ENCODE measurements at regions of chr19 and their contacts with region 1.

Region 1: DNA sequence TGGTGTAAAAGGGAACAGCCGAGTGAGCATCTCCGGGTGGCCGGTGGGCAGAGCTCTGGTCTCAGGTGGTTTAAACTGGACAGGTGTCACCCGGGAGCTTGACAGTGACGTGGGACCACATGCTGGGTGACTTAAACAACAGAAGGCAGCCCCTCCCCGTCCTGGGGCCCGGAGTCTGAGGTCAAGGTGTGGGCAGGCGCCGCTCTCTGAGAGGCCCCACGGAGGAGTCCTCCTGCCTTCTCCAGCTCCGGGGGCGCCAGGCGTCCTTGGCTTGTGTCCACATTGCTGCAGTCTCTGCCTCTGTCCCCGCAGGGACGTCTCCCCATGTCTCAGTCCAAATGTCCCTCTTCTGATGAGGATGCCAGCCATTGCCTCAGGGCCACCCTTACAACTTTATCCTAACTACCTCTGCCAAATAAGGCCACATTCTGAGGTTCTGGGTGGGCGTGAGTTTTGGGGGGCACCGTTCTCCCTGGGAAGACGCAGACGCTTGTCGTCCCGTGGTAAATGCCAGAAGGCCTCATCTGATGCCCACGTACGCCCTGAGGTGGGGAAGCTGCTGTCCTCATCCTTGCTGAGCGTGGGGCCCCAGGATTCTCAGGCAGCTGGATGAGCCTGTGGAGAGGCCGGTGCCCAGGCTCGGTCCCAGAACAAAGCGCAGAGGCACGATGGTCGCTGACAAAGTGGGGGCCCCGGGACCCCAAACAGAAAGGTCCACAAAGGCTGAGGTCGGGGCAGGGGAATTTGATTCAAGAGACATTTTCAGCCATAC is 12.9 kb downstream of the GZMM start:
- DNase-seq: peak; percentile 27
- ATAC-seq: peak; percentile 33
- H3K4me3 ChIP-seq: peak overlapping the region; percentile 36 to 73 (median 43)
- H3K27ac ChIP-seq: peak overlapping the region; percentile 81
- H3K4me1 ChIP-seq: peaks cover 55% of the 10 kb centered on the region
- H3K27me3 ChIP-seq: no peaks in the 10 kb centered on the region; a peak in 1 of 5 replicates
- CTCF ChIP-seq: no peak
- EP300 ChIP-seq: no peak
- POLR2A ChIP-seq: peak in 1 of 2 experiments; percentile 46; a peak in 1 of 4 replicates
- RAD21 ChIP-seq: no peak

Region 2: DNA sequence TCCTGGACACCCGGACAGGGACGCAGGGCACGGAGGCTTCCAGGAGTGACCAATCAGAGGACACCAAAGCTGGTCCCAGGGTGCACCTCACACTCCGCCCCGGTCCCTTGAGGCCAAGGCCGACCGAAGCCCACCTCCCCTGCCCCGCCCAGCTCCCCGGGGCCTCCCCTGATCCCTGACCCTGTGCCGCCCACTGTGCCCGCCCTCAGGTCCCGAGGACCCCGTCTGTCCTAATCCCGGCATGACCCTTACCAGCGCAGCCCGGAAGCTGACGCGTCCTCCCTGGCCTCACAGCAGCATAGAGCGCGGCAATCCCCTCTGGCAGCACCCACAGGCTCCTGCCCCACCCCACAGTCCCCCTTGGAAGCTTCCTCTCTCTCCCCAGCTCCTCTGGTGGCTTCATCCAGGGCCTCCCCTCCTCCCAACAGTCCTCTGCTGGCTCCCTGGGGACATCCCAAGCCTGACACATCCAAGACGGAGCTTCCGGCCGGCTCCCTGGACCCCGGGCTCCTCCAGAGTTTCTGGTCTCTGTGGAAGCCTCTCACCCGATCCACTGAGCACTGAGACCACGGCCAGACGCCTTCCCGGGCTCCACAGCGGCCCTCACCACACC is 32.6 kb before region 1 on chr19:
- CTCF ChIA-PET with region 1: no interaction called
- POLR2A ChIA-PET with region 1: interaction called, 15 read pairs
- in situ Hi-C with region 1: no loop called
- intact Hi-C with region 1: no loop called
- DNase-seq: peak; percentile 80
- ATAC-seq: peak; percentile 90
- H3K4me3 ChIP-seq: peak overlapping the region; percentile 30 to 63 (median 42); a peak in 5 of 6 replicates
- H3K27ac ChIP-seq: peak overlapping the region; percentile 95
- H3K4me1 ChIP-seq: peaks cover 58% of the 10 kb centered on the region
- H3K27me3 ChIP-seq: no peaks in the 10 kb centered on the region
- CTCF ChIP-seq: peak; percentile 35
- EP300 ChIP-seq: peak; percentile 84 to 91; a peak in 3 of 4 replicates
- POLR2A ChIP-seq: peak; percentile 59 to 79; a peak in 3 of 4 replicates
- RAD21 ChIP-seq: no peak

Region 3: DNA sequence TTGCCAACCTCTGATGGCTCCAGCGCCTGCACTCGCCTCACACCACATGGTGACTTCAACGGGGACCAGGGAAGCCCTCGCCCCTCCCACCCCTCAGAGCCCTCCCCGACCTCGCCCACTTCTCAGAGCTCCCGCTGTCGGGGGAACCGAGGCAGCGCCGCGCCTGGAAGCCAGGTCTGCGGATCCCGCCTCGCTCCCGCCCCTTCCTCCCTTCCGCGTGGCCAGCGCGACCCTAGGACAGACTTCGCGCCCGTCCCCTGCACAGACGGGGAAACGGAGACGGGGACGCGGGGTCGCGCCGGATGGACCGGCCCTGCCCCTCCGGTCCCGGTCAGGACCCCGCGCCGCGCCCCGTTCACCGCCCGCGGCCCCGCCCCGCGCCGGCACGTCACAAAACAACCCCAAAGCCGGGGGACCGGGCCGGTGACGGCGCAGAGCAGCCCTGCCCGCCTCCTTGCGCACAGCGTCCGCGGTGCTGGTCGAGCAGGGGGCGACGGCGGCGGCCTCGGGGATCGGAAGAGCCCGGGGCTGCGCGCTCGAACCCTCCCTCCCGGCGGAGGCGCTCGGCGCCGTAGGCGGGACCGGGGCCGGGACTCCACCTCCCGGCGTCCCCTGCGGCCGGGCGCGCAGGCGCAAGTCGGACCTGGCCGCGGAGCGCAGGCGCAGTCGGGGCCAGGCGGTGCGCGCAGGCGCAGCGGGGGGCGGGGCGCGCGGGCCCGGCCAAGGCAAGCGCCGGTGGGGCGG is 25.6 kb before region 1 on chr19:
- CTCF ChIA-PET with region 1: no interaction called
- POLR2A ChIA-PET with region 1: interaction called, 10 read pairs
- in situ Hi-C with region 1: no loop called
- intact Hi-C with region 1: no loop called
- DNase-seq: peak; percentile 80
- ATAC-seq: peak; percentile 68
- H3K4me3 ChIP-seq: peak overlapping the region; percentile 63 to 98 (median 97)
- H3K27ac ChIP-seq: peak overlapping the region; percentile 94
- H3K4me1 ChIP-seq: peaks cover 56% of the 10 kb centered on the region
- H3K27me3 ChIP-seq: no peaks in the 10 kb centered on the region
- CTCF ChIP-seq: peak; percentile 34
- EP300 ChIP-seq: no peak
- POLR2A ChIP-seq: peak; percentile 39 to 78
- RAD21 ChIP-seq: no peak; the same call in none of the 2 replicates

Region 4: GRCh38 chr19:572140-572742 is 15.4 kb after region 1 on chr19 and contains the start of gene BSG:
- CTCF ChIA-PET with region 1: no interaction called
- POLR2A ChIA-PET with region 1: interaction called, 45 read pairs
- in situ Hi-C with region 1: no loop called
- intact Hi-C with region 1: loop called (anchors 2 kb)
- DNase-seq: peak; percentile 94
- ATAC-seq: peak; percentile 53
- H3K4me3 ChIP-seq: peak within 1 kb of the TSS; percentile 90 to 99 (median 96)
- H3K27ac ChIP-seq: peak within 1 kb of the TSS; percentile 95
- H3K4me1 ChIP-seq: peaks cover 30% of the 10 kb centered on the region
- H3K27me3 ChIP-seq: no peaks in the 10 kb centered on the region; a peak in 1 of 5 replicates
- CTCF ChIP-seq: no peak
- EP300 ChIP-seq: 0 out of 4 replicates have a peak, but pooled peaks of 1 of the 2 experiments have one; percentile 23
- POLR2A ChIP-seq: peak; percentile 96 to 97
- RAD21 ChIP-seq: peak; percentile 70
- total RNA-seq, gene BSG: 136 and 309 TPM in 2 replicates

Region 5: GRCh38 chr19:588093-588740 is 31.4 kb after region 1 on chr19:
- CTCF ChIA-PET with region 1: no interaction called
- POLR2A ChIA-PET with region 1: interaction called, 7 read pairs
- in situ Hi-C with region 1: loop called (anchors 5 kb)
- intact Hi-C with region 1: no loop called
- DNase-seq: peak; percentile 57
- ATAC-seq: peak; percentile 60
- H3K4me3 ChIP-seq: peak overlapping the region in 1 of 3 experiments; percentile 54; a peak in 1 of 6 replicates
- H3K27ac ChIP-seq: no peak overlapping the region
- H3K4me1 ChIP-seq: peaks cover 35% of the 10 kb centered on the region
- H3K27me3 ChIP-seq: peaks cover 10 to 46% of the 10 kb centered on the region in 2 experiments
- CTCF ChIP-seq: peak; percentile 78
- EP300 ChIP-seq: no peak
- POLR2A ChIP-seq: no peak
- RAD21 ChIP-seq: peak; percentile 33

Region 6: GRCh38 chr19:638624-639252 is 81.9 kb after region 1 on chr19:
- CTCF ChIA-PET with region 1: no interaction called
- POLR2A ChIA-PET with region 1: no interaction called
- in situ Hi-C with region 1: no loop called
- intact Hi-C with region 1: no loop called
- DNase-seq: no peak
- ATAC-seq: no peak
- H3K4me3 ChIP-seq: peak overlapping the region in 2 of 3 experiments; percentile 56 to 61; a peak in 3 of 6 replicates
- H3K27ac ChIP-seq: no peak overlapping the region
- H3K4me1 ChIP-seq: peaks cover 18% of the 10 kb centered on the region
- H3K27me3 ChIP-seq: no peaks in the 10 kb centered on the region
- CTCF ChIP-seq: no peak
- EP300 ChIP-seq: no peak
- POLR2A ChIP-seq: no peak
- RAD21 ChIP-seq: no peak